T-cell (primary cell): ENCODE measurements at regions of chr7 and their contacts with region 1.

Region 1: DNA sequence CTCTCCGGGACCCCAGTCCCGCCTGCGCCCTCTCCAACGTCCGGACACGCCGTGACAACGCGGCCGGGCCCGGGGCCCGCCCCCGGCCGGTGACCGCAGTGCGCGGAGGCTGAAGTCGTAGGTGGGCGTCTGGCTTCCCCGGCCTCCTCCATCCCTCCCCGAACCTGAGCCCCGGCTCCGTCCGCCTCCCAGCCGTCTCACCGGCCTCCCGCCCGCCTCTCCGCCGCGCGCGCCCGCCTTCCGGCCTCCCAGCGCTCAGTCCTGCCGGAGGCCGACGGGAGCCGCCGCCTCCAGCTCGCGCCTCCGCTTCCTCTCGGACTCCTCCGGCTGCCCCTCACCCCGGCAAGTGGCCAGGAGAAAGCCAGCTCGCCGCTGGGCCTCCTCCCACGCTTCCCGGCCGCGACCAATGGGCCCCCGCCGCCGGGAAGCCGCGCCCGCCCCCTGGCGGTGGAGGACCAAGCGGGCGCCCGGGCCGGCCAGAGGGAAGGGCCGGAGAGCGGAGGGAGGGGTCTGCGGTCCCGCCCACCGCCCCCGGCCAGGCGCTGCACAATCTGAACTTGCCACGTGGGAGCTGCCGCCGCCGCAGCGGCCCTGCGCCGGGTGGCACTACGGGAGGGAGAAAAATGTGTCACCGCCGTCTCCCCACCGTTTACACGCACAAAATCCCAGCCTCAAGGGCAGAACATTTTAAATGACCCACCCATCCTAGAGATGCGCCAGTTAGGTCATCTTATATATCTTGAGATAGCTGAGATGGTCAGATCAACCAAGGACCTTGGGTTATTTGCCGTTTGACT is at the start of gene FAM3C:
- DNase-seq: peak; percentile 24 to 84 (median 50)
- ATAC-seq: peak; percentile 82 to 87 (median 82)
- H3K4me3 ChIP-seq: peak within 1 kb of the TSS; percentile 56 to 82
- H3K4me3 Mint-ChIP-seq: peak within 1 kb of the TSS; percentile 80 to 89 (median 83)
- H3K27ac ChIP-seq: peak within 1 kb of the TSS; percentile 70
- H3K27ac Mint-ChIP-seq: peak within 1 kb of the TSS; percentile 79 to 80
- H3K4me1 ChIP-seq: peaks cover 5 to 7% of the 10 kb centered on the region in 2 experiments
- H3K4me1 Mint-ChIP-seq: peaks cover 33 to 39% (median 37%) of the 10 kb centered on the region in 3 donors
- H3K27me3 ChIP-seq: no peaks in the 10 kb centered on the region
- H3K27me3 Mint-ChIP-seq: no peaks in the 10 kb centered on the region
- total RNA-seq, gene FAM3C: 8.8 to 21.8 (median 14.9) TPM

Region 2: GRCh38 chr7:120043250-120043649 is 1352.9 kb before region 1 on chr7:
- CTCF ChIA-PET with region 1: no interaction called
- POLR2A ChIA-PET with region 1: no interaction called
- DNase-seq: no peak
- ATAC-seq: no peak
- H3K4me3 ChIP-seq: no peak overlapping the region
- H3K4me3 Mint-ChIP-seq: no peak overlapping the region
- H3K27ac ChIP-seq: no peak overlapping the region
- H3K27ac Mint-ChIP-seq: no peak overlapping the region
- H3K4me1 ChIP-seq: no peaks in the 10 kb centered on the region
- H3K4me1 Mint-ChIP-seq: no peaks in the 10 kb centered on the region
- H3K27me3 ChIP-seq: no peaks in the 10 kb centered on the region
- H3K27me3 Mint-ChIP-seq: no peaks in the 10 kb centered on the region

Region 3: DNA sequence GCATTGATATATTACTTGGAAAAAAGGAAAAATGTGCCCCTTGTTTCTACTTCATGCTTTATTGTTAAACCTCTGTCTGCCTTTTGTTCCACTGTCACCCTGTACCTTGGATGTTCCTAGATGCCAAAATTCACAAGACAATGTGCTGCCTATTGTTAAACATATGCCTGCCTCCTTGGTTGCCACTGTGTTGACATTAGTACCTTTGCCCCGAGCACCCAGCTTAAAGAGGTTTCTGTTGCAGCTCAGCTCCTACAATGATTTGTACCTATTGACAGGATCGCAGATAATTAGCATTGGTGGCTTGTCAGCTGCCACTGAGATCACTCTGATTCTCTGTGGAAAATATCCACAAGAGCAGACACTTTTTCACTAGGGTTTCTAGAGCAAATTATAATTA is 935.2 kb before region 1 on chr7:
- CTCF ChIA-PET with region 1: no interaction called
- POLR2A ChIA-PET with region 1: no interaction called
- DNase-seq: no peak
- ATAC-seq: no peak
- H3K4me3 ChIP-seq: no peak overlapping the region
- H3K4me3 Mint-ChIP-seq: no peak overlapping the region
- H3K27ac ChIP-seq: no peak overlapping the region
- H3K27ac Mint-ChIP-seq: no peak overlapping the region
- H3K4me1 ChIP-seq: no peaks in the 10 kb centered on the region
- H3K4me1 Mint-ChIP-seq: no peaks in the 10 kb centered on the region
- H3K27me3 ChIP-seq: no peaks in the 10 kb centered on the region
- H3K27me3 Mint-ChIP-seq: no peaks in the 10 kb centered on the region

Region 4: GRCh38 chr7:121323515-121324302 is 72.5 kb before region 1 on chr7:
- CTCF ChIA-PET with region 1: no interaction called
- POLR2A ChIA-PET with region 1: no interaction called
- DNase-seq: no peak
- ATAC-seq: no peak
- H3K4me3 ChIP-seq: no peak overlapping the region
- H3K4me3 Mint-ChIP-seq: no peak overlapping the region
- H3K27ac ChIP-seq: no peak overlapping the region
- H3K27ac Mint-ChIP-seq: no peak overlapping the region
- H3K4me1 ChIP-seq: peaks cover 0 to under 1% of the 10 kb centered on the region in 2 experiments
- H3K4me1 Mint-ChIP-seq: peaks cover 4 to 8% (median 4%) of the 10 kb centered on the region in 3 donors
- H3K27me3 ChIP-seq: peaks cover 14 to 16% of the 10 kb centered on the region in 2 experiments
- H3K27me3 Mint-ChIP-seq: peaks cover 33 to 36% of the 10 kb centered on the region in 2 donors

Region 5: DNA sequence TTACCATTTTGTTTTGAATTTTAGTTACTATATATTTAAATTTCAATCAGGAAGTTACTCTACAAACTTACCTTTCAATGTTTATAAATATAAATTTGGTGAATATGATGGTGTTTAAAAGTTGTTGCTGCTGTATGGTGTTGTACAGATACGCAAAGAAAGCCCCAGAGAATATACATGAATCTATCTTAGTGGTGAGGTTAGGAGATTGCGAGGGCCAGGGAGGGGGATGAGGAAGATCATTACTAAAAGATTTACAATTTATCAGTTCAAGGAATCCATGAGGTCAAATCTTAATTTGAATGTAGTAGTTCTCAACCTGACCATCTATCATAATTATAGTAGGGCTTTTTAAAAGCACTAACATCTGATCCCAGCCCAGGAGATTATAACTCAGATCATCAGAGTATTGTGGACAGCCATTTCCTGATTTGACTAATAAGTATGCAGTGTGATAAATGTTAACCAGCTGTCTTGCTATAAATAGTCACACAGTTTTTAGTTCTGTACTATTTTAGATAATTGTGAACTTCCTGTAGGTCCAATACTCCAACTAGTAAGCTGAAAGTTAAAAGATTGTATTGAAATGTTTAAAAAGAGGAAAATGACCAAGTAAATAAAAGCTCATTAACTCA is 23.7 kb before region 1 on chr7:
- CTCF ChIA-PET with region 1: interaction called, 27 to 37 read pairs
- POLR2A ChIA-PET with region 1: interaction called in 1 of 2 experiments, 4 read pairs
- DNase-seq: peak in 1 of 35 experiments; percentile 22
- ATAC-seq: peak in 2 of 4 experiments; percentile 32 to 49
- H3K4me3 ChIP-seq: no peak overlapping the region
- H3K4me3 Mint-ChIP-seq: peak overlapping the region in 1 of 3 donors; percentile 34
- H3K27ac ChIP-seq: peak overlapping the region; percentile 27
- H3K27ac Mint-ChIP-seq: peak overlapping the region; percentile 9 to 63
- H3K4me1 ChIP-seq: no peaks in the 10 kb centered on the region
- H3K4me1 Mint-ChIP-seq: peaks cover 19 to 41% (median 26%) of the 10 kb centered on the region in 3 donors
- H3K27me3 ChIP-seq: no peaks in the 10 kb centered on the region
- H3K27me3 Mint-ChIP-seq: no peaks in the 10 kb centered on the region

Region 6: GRCh38 chr7:121385800-121386179 is 10.4 kb before region 1 on chr7:
- CTCF ChIA-PET with region 1: interaction called, 16 to 38 read pairs
- POLR2A ChIA-PET with region 1: interaction called in 1 of 2 experiments, 5 read pairs
- DNase-seq: peak in 10 of 35 experiments; percentile 3 to 60 (median 13)
- ATAC-seq: peak; percentile 60 to 93 (median 69)
- H3K4me3 ChIP-seq: no peak overlapping the region
- H3K4me3 Mint-ChIP-seq: no peak overlapping the region
- H3K27ac ChIP-seq: no peak overlapping the region
- H3K27ac Mint-ChIP-seq: no peak overlapping the region
- H3K4me1 ChIP-seq: peaks cover 2 to 18% of the 10 kb centered on the region in 2 experiments
- H3K4me1 Mint-ChIP-seq: peaks cover 68 to 80% (median 76%) of the 10 kb centered on the region in 3 donors
- H3K27me3 ChIP-seq: no peaks in the 10 kb centered on the region
- H3K27me3 Mint-ChIP-seq: no peaks in the 10 kb centered on the region

Region 7: DNA sequence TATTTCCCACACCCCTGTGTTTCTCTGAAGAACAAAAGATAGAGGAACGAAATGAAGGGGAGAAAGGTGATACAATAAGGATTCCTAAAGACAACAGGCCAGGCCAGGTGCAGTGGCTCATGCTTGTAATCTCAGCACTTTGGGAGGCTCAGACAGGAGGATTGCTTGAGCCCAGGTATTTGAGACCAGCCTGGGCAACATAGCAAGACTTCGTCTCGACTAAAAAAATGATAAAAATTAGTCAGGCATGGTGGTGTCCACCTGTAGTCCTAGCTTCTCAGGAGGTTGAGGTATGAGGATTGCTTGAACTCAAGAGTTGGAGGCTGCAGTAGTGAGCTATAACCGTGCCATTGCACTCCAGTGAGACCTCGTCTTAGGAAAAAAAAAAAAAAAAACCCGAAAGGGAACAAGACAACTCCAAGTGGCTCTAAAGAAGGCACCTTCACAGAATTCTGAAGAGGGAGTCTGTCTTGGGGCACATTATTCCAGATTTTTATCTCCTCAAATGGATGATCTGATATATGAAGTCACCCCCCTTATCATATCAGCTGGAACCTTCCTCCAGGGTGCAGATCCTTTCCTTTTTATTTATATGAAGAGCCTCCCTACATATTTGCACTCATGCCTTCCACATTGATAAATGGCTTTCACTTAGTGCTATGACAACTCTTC is 41.4 kb after region 1 on chr7:
- CTCF ChIA-PET with region 1: interaction called, 12 to 19 read pairs
- POLR2A ChIA-PET with region 1: no interaction called
- DNase-seq: no peak
- ATAC-seq: peak in 2 of 4 experiments; percentile 21 to 23
- H3K4me3 ChIP-seq: no peak overlapping the region
- H3K4me3 Mint-ChIP-seq: peak overlapping the region; percentile 66 to 72 (median 68)
- H3K27ac ChIP-seq: peak overlapping the region; percentile 62
- H3K27ac Mint-ChIP-seq: peak overlapping the region; percentile 97
- H3K4me1 ChIP-seq: peaks cover 9 to 22% of the 10 kb centered on the region in 2 experiments
- H3K4me1 Mint-ChIP-seq: peaks cover 26 to 53% (median 41%) of the 10 kb centered on the region in 3 donors
- H3K27me3 ChIP-seq: no peaks in the 10 kb centered on the region
- H3K27me3 Mint-ChIP-seq: no peaks in the 10 kb centered on the region

Region 8: GRCh38 chr7:121547544-121548092 is 151.5 kb after region 1 on chr7:
- CTCF ChIA-PET with region 1: interaction called, 4 to 12 read pairs
- POLR2A ChIA-PET with region 1: no interaction called
- DNase-seq: peak in 2 of 35 experiments; percentile 19 to 74
- ATAC-seq: peak; percentile 64 to 75 (median 70)
- H3K4me3 ChIP-seq: no peak overlapping the region
- H3K4me3 Mint-ChIP-seq: no peak overlapping the region
- H3K27ac ChIP-seq: no peak overlapping the region
- H3K27ac Mint-ChIP-seq: no peak overlapping the region
- H3K4me1 ChIP-seq: no peaks in the 10 kb centered on the region
- H3K4me1 Mint-ChIP-seq: peaks cover 0 to 19% (median 16%) of the 10 kb centered on the region in 3 donors
- H3K27me3 ChIP-seq: no peaks in the 10 kb centered on the region
- H3K27me3 Mint-ChIP-seq: peaks cover 0 to 3% of the 10 kb centered on the region in 2 donors